ENCODE measurements at regions of chr1 and their contacts with region 1.

Region 1: GRCh38 chr1:224434691-224435317 is at the start of gene WDR26:
- DNase-seq: peak; percentile 67 to 91 (median 86)
- ATAC-seq: peak; percentile 90
- H3K4me3 ChIP-seq: peak within 1 kb of the TSS; percentile 93
- H3K4me3 Mint-ChIP-seq: peak within 1 kb of the TSS; percentile 84 to 99 (median 96)
- H3K27ac ChIP-seq: peak within 1 kb of the TSS; percentile 97
- H3K27ac Mint-ChIP-seq: peak within 1 kb of the TSS; percentile 92 to 99 (median 97)
- H3K4me1 ChIP-seq: peaks cover 27 to 30% of the 10 kb centered on the region in 2 donors
- H3K4me1 Mint-ChIP-seq: peaks cover 42 to 63% (median 59%) of the 10 kb centered on the region in 7 donors
- H3K27me3 ChIP-seq: no peaks in the 10 kb centered on the region
- H3K27me3 Mint-ChIP-seq: no peaks in the 10 kb centered on the region
- total RNA-seq, gene WDR26: 80.5 to 164 (median 104) TPM

Region 2: DNA sequence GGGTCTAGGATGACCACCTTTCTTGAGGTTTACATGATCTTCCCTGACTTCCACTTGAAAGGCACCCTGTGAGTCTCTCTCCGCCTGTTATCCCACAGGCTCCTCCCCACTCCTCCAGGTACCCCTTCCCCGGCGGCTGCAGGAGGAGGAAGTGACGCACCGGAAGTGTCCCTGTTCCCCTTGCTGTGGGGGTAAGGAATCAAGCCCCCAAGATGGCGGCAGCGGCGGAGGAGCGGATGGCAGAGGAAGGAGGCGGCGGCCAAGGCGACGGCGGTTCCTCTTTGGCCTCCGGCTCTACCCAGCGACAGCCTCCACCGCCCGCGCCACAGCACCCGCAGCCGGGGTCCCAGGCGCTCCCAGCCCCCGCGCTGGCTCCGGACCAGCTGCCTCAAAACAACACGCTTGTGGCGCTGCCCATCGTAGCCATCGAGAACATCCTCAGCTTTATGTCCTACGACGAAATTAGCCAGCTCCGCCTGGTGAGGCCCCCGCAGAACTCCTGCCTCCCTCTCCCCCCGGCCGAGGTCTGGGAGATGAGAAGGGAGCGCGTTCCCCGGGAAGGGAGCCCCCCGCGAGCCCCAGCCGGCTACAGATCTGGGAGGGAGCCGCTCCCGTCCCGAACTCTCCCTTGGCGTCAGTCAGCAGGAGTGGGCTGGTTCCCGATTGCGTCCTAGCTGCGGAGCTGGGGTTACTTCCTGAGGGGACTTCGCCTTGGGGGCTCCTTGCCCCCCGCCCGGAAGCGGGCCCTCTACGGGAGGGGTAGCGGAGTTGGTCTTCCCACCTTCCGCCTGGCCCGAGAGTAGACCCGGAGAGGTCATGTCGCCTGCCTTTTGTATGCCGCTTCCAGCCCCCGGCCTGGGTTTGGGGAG is 320.7 kb before region 1 on chr1 and contains the start of gene FBXO28:
- CTCF ChIA-PET with region 1: no interaction called
- POLR2A ChIA-PET with region 1: interaction called, 9 read pairs
- intact Hi-C with region 1: loop called (anchors 1 kb)
- DNase-seq: peak; percentile 69 to 94 (median 88)
- ATAC-seq: peak; percentile 96
- H3K4me3 ChIP-seq: peak within 1 kb of the TSS; percentile 92
- H3K4me3 Mint-ChIP-seq: peak within 1 kb of the TSS; percentile 89 to 96 (median 92)
- H3K27ac ChIP-seq: peak within 1 kb of the TSS; percentile 92
- H3K27ac Mint-ChIP-seq: peak within 1 kb of the TSS; percentile 89 to 96 (median 94)
- H3K4me1 ChIP-seq: peaks cover 4 to 14% of the 10 kb centered on the region in 2 donors
- H3K4me1 Mint-ChIP-seq: peaks cover 11 to 41% (median 30%) of the 10 kb centered on the region in 7 donors
- H3K27me3 ChIP-seq: no peaks in the 10 kb centered on the region
- H3K27me3 Mint-ChIP-seq: peaks cover 0 to 26% (median 11%) of the 10 kb centered on the region in 5 donors
- total RNA-seq, gene FBXO28: 25.2 to 37.8 (median 26.5) TPM

Region 3: GRCh38 chr1:224300314-224300713 is 134.5 kb before region 1 on chr1:
- CTCF ChIA-PET with region 1: no interaction called
- POLR2A ChIA-PET with region 1: no interaction called
- intact Hi-C with region 1: no loop called
- DNase-seq: no peak
- ATAC-seq: no peak
- H3K4me3 ChIP-seq: no peak overlapping the region
- H3K4me3 Mint-ChIP-seq: no peak overlapping the region
- H3K27ac ChIP-seq: no peak overlapping the region
- H3K27ac Mint-ChIP-seq: no peak overlapping the region
- H3K4me1 ChIP-seq: no peaks in the 10 kb centered on the region
- H3K4me1 Mint-ChIP-seq: peaks cover 0 to 3% (median 0%) of the 10 kb centered on the region in 7 donors
- H3K27me3 ChIP-seq: no peaks in the 10 kb centered on the region
- H3K27me3 Mint-ChIP-seq: no peaks in the 10 kb centered on the region

Region 4: GRCh38 chr1:224329842-224330753 is 104.7 kb before region 1 on chr1 and contains the start of gene NVL:
- CTCF ChIA-PET with region 1: no interaction called
- POLR2A ChIA-PET with region 1: interaction called, 4 read pairs
- intact Hi-C with region 1: loop called (anchors 1 kb)
- DNase-seq: peak; percentile 71 to 84 (median 79)
- ATAC-seq: peak; percentile 91
- H3K4me3 ChIP-seq: peak within 1 kb of the TSS; percentile 96
- H3K4me3 Mint-ChIP-seq: peak within 1 kb of the TSS; percentile 91 to 100 (median 97)
- H3K27ac ChIP-seq: peak within 1 kb of the TSS; percentile 90
- H3K27ac Mint-ChIP-seq: peak within 1 kb of the TSS; percentile 97 to 100 (median 99)
- H3K4me1 ChIP-seq: peaks cover 3 to 6% of the 10 kb centered on the region in 2 donors
- H3K4me1 Mint-ChIP-seq: peaks cover 29 to 63% (median 47%) of the 10 kb centered on the region in 7 donors
- H3K27me3 ChIP-seq: no peaks in the 10 kb centered on the region
- H3K27me3 Mint-ChIP-seq: no peaks in the 10 kb centered on the region
- total RNA-seq, gene NVL: 23.9 to 48.6 (median 44.7) TPM

Region 5: GRCh38 chr1:224377676-224378006 is 57.2 kb before region 1 on chr1:
- CTCF ChIA-PET with region 1: no interaction called
- POLR2A ChIA-PET with region 1: interaction called, 5 read pairs
- intact Hi-C with region 1: loop called (anchors 2 kb)
- DNase-seq: no peak
- ATAC-seq: peak; percentile 46
- H3K4me3 ChIP-seq: no peak overlapping the region
- H3K4me3 Mint-ChIP-seq: peak overlapping the region; percentile 34 to 82 (median 64)
- H3K27ac ChIP-seq: no peak overlapping the region
- H3K27ac Mint-ChIP-seq: peak overlapping the region; percentile 53 to 93 (median 81)
- H3K4me1 ChIP-seq: peaks cover 74 to 76% of the 10 kb centered on the region in 2 donors
- H3K4me1 Mint-ChIP-seq: peaks cover 74 to 97% (median 92%) of the 10 kb centered on the region in 7 donors
- H3K27me3 ChIP-seq: no peaks in the 10 kb centered on the region
- H3K27me3 Mint-ChIP-seq: no peaks in the 10 kb centered on the region

Region 6: DNA sequence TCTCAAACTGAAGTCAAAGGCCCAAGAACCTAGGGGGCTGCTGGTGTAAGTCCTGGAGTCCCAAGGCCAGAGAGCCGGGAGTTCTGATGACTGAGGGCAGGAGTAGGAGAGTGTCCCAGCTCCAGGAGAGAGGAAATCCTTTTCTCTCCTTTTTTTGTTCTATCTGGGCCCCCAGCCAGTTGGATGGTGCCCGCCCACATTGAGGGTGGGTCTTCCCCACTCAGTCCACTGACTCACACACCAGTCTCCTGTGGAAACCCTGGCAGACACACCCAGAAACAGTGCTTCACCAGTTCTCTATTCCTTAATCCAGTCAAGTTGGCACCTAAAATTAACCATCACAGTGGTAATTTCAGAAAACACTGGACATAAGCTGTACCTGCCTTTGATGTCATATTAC is 12.4 kb after region 1 on chr1:
- CTCF ChIA-PET with region 1: interaction called, 3 read pairs
- POLR2A ChIA-PET with region 1: interaction called, 17 read pairs
- intact Hi-C with region 1: no loop called
- DNase-seq: no peak
- ATAC-seq: no peak
- H3K4me3 ChIP-seq: no peak overlapping the region
- H3K4me3 Mint-ChIP-seq: no peak overlapping the region
- H3K27ac ChIP-seq: no peak overlapping the region
- H3K27ac Mint-ChIP-seq: no peak overlapping the region
- H3K4me1 ChIP-seq: no peaks in the 10 kb centered on the region
- H3K4me1 Mint-ChIP-seq: peaks cover 5 to 23% (median 16%) of the 10 kb centered on the region in 7 donors
- H3K27me3 ChIP-seq: no peaks in the 10 kb centered on the region
- H3K27me3 Mint-ChIP-seq: no peaks in the 10 kb centered on the region

Region 7: DNA sequence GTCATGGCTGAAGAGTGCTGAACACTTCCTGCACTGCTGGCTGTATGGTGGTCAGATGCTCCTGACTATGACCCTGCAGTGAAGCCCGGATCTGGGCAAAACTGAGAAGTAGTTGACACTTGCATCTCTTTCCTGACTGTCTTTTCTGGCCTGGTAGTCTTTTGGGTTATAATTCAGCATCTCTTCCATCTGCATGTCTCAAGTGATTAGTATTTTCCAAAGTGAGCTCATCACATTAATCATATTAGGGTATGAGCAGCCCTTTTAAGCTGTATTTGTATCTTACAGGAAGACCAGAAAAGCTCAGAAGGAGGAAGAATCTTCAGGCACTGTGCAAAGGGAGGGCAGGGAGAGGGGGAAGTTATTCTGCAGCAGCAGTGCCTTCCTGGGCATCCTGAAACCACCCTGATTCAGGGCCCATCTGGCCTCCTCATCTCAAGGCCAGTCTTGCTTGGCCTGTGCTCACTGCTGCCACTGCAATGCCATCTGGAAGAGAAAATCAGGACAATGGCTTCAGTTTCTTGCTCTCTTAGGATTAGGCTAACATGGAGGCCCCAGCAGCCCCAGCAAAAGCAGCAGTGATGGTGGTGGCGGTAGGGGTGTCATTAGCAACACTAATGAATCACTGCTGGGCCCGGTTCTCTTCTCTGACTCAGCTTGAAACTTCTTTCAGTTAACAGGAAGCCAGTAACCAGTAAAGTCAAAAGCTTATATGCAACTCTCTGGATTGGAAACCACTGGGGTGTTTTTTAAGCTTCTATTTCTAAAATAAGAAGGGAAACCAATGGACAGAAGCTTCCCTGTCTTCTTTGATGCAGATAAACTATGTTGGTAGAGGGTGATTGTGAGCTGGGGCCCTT is 63.1 kb after region 1 on chr1:
- CTCF ChIA-PET with region 1: no interaction called
- POLR2A ChIA-PET with region 1: no interaction called
- intact Hi-C with region 1: loop called in 1 of 2 experiments (anchors 1 kb)
- DNase-seq: peak in 1 of 9 donors; percentile 62
- ATAC-seq: peak; percentile 88
- H3K4me3 ChIP-seq: no peak overlapping the region
- H3K4me3 Mint-ChIP-seq: peak overlapping the region in 2 of 10 donors; percentile 34 to 67
- H3K27ac ChIP-seq: no peak overlapping the region
- H3K27ac Mint-ChIP-seq: peak overlapping the region in 5 of 9 donors; percentile 19 to 91 (median 55)
- H3K4me1 ChIP-seq: peaks cover 0 to 14% of the 10 kb centered on the region in 2 donors
- H3K4me1 Mint-ChIP-seq: peaks cover 19 to 55% (median 25%) of the 10 kb centered on the region in 7 donors
- H3K27me3 ChIP-seq: no peaks in the 10 kb centered on the region
- H3K27me3 Mint-ChIP-seq: no peaks in the 10 kb centered on the region

Region 8: GRCh38 chr1:225290244-225290643 is 855.4 kb after region 1 on chr1:
- CTCF ChIA-PET with region 1: no interaction called
- POLR2A ChIA-PET with region 1: no interaction called
- intact Hi-C with region 1: no loop called
- DNase-seq: no peak
- ATAC-seq: no peak
- H3K4me3 ChIP-seq: no peak overlapping the region
- H3K4me3 Mint-ChIP-seq: no peak overlapping the region
- H3K27ac ChIP-seq: no peak overlapping the region
- H3K27ac Mint-ChIP-seq: no peak overlapping the region
- H3K4me1 ChIP-seq: no peaks in the 10 kb centered on the region
- H3K4me1 Mint-ChIP-seq: no peaks in the 10 kb centered on the region
- H3K27me3 ChIP-seq: no peaks in the 10 kb centered on the region
- H3K27me3 Mint-ChIP-seq: peaks cover 4 to 17% (median 13%) of the 10 kb centered on the region in 5 donors

Region 9: DNA sequence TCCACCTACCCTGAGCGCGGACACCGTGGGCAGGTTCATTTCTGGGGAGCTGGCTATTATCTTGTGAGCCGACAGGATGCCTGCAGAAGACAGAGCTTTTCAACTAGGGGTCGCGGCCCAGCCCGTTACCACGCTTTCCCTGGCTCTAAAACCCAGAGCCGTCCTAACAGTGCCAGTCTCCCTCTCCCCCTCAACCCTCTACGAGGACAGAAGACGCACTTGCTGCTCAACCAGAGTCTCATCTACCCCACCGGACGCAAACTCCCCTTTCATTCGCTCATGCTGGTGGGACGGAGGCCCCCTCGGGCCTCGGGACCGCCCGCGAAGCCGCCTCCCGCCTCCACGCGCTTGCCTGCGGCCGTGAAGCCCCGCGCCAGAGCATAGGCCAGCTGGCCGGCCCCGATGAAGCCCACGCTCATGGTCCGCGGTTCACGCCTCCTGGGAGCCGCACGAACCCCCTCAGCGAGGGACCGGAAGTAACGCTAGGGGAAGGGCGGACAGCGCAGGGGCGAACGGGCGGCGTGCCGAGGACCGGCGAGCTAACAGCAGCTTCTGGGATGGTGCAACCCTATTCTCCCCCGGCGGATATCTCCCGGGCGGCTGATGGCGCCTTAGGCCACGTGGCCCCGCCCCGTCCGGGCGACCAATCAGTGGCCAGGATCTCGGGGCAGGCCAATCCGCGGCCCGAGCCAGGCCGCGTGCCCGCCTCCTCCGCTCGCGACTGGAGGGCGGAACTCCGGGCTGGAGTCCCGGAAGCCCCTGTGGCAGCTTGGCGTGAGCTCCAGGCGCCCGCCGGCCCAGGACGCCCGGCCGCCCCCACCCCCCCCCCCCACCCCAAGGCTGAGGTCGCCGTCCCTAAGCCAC is 1489.1 kb after region 1 on chr1 and contains the start of gene PYCR2:
- CTCF ChIA-PET with region 1: no interaction called
- POLR2A ChIA-PET with region 1: no interaction called
- intact Hi-C with region 1: loop called in 1 of 2 experiments (anchors 10 kb)
- DNase-seq: peak; percentile 92 to 97 (median 94)
- ATAC-seq: peak; percentile 99
- H3K4me3 ChIP-seq: peak within 1 kb of the TSS; percentile 100
- H3K4me3 Mint-ChIP-seq: peak within 1 kb of the TSS; percentile 86 to 98 (median 94)
- H3K27ac ChIP-seq: peak within 1 kb of the TSS; percentile 95
- H3K27ac Mint-ChIP-seq: peak within 1 kb of the TSS; percentile 90 to 98 (median 95)
- H3K4me1 ChIP-seq: peaks cover 11 to 65% of the 10 kb centered on the region in 2 donors
- H3K4me1 Mint-ChIP-seq: peaks cover 45 to 75% (median 60%) of the 10 kb centered on the region in 7 donors
- H3K27me3 ChIP-seq: no peaks in the 10 kb centered on the region
- H3K27me3 Mint-ChIP-seq: no peaks in the 10 kb centered on the region
- total RNA-seq, gene PYCR2: 46.4 to 137 (median 109) TPM